ENCODE measurements at regions of chr14 and their contacts with region 1.

Region 1: GRCh38 chr14:51283402-51284085 is 43.5 kb downstream of the TMX1 start:
- DNase-seq: peak; percentile 78
- H3K4me3 ChIP-seq: no peak overlapping the region
- H3K27ac ChIP-seq: no peak overlapping the region
- H3K4me1 ChIP-seq: peaks cover 9% of the 10 kb centered on the region
- H3K27me3 ChIP-seq: no peaks in the 10 kb centered on the region
- CTCF ChIP-seq: peak; percentile 67 to 84

Region 2: DNA sequence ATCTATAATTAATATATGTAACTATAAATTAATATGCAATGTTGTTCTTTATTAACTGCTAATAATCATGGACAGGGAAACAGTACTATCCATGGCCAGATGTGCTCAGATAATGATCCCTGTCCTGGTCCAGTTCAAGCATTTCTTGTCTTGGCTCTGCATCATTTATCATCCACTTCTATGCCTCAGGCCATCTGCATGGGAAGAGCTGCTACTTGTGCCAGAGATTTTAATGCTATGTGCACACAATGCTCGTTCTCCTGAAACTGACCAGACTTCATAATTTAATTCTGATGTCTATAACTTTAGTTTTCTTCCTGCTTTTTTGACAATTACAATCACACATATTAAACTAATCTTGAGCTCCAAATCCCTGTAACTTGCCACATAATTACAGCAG is 54.7 kb before region 1 on chr14:
- CTCF ChIA-PET with region 1: no interaction called
- dilution Hi-C with region 1: no loop called
- in situ Hi-C with region 1: no loop called
- intact Hi-C with region 1: no loop called
- DNase-seq: no peak
- H3K4me3 ChIP-seq: no peak overlapping the region
- H3K27ac ChIP-seq: no peak overlapping the region
- H3K4me1 ChIP-seq: no peaks in the 10 kb centered on the region
- H3K27me3 ChIP-seq: no peaks in the 10 kb centered on the region
- CTCF ChIP-seq: no peak

Region 3: DNA sequence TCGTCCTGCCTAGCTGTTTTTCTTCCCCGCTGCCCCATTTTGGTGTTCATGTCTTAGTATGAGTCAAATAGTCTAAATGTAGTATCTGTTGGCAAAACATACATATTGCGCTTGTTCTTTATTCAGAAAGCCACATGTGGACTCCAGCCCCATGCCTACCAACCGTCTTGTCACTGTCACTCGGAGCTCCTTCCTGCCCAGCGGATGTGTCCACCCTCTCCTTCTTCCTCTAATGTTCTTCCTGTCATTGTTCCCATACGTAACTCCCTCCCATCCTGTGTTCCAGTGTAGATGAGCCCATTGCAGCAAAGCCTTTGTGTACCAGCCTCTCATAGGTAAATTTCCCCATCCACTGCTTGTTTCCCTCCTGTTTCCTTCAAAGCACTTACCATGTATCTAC is 77.0 kb after region 1 on chr14:
- CTCF ChIA-PET with region 1: no interaction called
- dilution Hi-C with region 1: loop called (anchors 5 kb)
- in situ Hi-C with region 1: no loop called
- intact Hi-C with region 1: loop called (anchors 5 kb)
- DNase-seq: no peak
- H3K4me3 ChIP-seq: no peak overlapping the region
- H3K27ac ChIP-seq: no peak overlapping the region
- H3K4me1 ChIP-seq: peaks cover 26% of the 10 kb centered on the region
- H3K27me3 ChIP-seq: no peaks in the 10 kb centered on the region
- CTCF ChIP-seq: no peak

Region 4: GRCh38 chr14:51369814-51370213 is 86.3 kb after region 1 on chr14:
- CTCF ChIA-PET with region 1: no interaction called
- dilution Hi-C with region 1: no loop called
- in situ Hi-C with region 1: no loop called
- intact Hi-C with region 1: loop called (anchors 5 kb)
- DNase-seq: no peak
- H3K4me3 ChIP-seq: no peak overlapping the region
- H3K27ac ChIP-seq: no peak overlapping the region
- H3K4me1 ChIP-seq: peaks cover 41% of the 10 kb centered on the region
- H3K27me3 ChIP-seq: no peaks in the 10 kb centered on the region
- CTCF ChIP-seq: peak; percentile 24 to 47

Region 5: DNA sequence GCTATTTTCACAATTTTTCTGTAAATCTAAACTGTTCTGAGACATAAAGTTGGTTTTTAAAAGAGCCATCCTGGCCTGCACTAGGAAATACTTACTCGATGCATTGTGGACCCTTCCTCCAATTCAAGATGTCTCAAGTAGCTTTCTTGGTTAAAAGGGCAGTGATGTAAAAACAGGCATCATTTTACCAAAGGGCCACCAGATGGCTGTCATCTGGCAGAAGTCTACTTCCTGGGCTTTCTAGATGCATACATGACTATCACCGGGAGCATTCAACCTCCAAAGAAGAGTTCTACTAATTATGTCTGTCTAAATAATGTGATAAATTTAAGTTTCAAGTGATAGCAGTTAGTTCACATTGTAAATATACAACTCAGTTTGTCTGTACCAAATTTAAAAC is 271.4 kb after region 1 on chr14:
- CTCF ChIA-PET with region 1: no interaction called
- dilution Hi-C with region 1: no loop called
- in situ Hi-C with region 1: loop called in 1 of 2 experiments (anchors 25 kb)
- intact Hi-C with region 1: loop called (anchors 2 kb)
- DNase-seq: no peak
- H3K4me3 ChIP-seq: no peak overlapping the region
- H3K27ac ChIP-seq: peak overlapping the region; percentile 11
- H3K4me1 ChIP-seq: peaks cover 39% of the 10 kb centered on the region
- H3K27me3 ChIP-seq: no peaks in the 10 kb centered on the region
- CTCF ChIP-seq: no peak

Region 6: DNA sequence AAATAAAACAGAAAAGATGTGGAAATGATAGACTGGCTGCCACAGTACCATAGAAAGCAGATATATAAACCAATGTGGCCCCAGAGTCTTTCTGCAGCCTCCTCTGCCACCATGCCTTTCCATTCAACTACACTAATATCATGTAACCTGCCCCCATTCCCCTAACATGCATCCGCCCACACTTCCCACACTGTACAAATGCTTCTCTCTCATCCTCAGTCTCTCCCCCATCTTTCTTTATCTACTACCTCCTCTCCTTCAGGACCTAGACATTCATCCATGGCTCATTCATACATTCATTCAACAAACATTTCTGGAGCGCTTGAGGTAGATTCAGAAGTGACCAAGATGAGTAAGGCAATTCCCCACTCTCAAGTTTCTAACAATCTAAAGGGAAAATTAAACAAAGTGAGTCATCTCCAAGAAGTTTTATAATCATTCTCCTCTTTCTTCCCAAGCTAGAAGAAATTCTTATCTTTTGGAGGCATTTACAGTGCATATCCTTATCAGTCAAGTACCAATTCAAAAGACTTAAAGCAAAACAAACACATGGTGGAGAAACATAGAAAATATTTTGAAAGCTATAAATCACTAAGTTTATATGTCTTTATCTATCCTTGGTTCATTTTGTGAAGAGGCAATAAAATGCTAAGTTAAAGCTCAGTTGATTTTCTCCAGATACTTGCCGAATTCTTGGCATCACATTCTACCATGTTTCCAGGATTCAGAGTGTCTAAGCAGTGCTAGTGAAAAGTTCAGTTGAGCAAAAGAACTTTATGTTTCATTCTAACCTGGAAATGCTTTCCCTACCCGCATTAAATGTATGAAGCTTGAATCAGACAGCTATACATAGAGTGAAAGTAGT is 297.7 kb after region 1 on chr14:
- CTCF ChIA-PET with region 1: no interaction called
- dilution Hi-C with region 1: no loop called
- in situ Hi-C with region 1: no loop called
- intact Hi-C with region 1: loop called (anchors 5 kb)
- DNase-seq: peak; percentile 61
- H3K4me3 ChIP-seq: no peak overlapping the region
- H3K27ac ChIP-seq: no peak overlapping the region
- H3K4me1 ChIP-seq: peaks cover 24% of the 10 kb centered on the region
- H3K27me3 ChIP-seq: no peaks in the 10 kb centered on the region
- CTCF ChIP-seq: no peak

Region 7: GRCh38 chr14:51860164-51860824 is 576.8 kb after region 1 on chr14 and contains the start of gene GNG2:
- CTCF ChIA-PET with region 1: no interaction called
- dilution Hi-C with region 1: no loop called
- in situ Hi-C with region 1: no loop called
- intact Hi-C with region 1: no loop called
- DNase-seq: peak; percentile 84
- H3K4me3 ChIP-seq: peak within 1 kb of the TSS; percentile 19 to 40 (median 28)
- H3K27ac ChIP-seq: peak within 1 kb of the TSS; percentile 26
- H3K4me1 ChIP-seq: peaks cover 13% of the 10 kb centered on the region
- H3K27me3 ChIP-seq: no peaks in the 10 kb centered on the region
- CTCF ChIP-seq: no peak
- total RNA-seq, gene GNG2: 2.7 to 6.8 TPM

Region 8: GRCh38 chr14:51979088-51979709 is 695.7 kb after region 1 on chr14:
- CTCF ChIA-PET with region 1: no interaction called
- dilution Hi-C with region 1: no loop called
- in situ Hi-C with region 1: loop called (anchors 25 kb)
- intact Hi-C with region 1: loop called (anchors 1 kb)
- DNase-seq: peak; percentile 54
- H3K4me3 ChIP-seq: no peak overlapping the region
- H3K27ac ChIP-seq: no peak overlapping the region
- H3K4me1 ChIP-seq: no peaks in the 10 kb centered on the region
- H3K27me3 ChIP-seq: no peaks in the 10 kb centered on the region
- CTCF ChIP-seq: peak; percentile 88 to 92

Region 9: DNA sequence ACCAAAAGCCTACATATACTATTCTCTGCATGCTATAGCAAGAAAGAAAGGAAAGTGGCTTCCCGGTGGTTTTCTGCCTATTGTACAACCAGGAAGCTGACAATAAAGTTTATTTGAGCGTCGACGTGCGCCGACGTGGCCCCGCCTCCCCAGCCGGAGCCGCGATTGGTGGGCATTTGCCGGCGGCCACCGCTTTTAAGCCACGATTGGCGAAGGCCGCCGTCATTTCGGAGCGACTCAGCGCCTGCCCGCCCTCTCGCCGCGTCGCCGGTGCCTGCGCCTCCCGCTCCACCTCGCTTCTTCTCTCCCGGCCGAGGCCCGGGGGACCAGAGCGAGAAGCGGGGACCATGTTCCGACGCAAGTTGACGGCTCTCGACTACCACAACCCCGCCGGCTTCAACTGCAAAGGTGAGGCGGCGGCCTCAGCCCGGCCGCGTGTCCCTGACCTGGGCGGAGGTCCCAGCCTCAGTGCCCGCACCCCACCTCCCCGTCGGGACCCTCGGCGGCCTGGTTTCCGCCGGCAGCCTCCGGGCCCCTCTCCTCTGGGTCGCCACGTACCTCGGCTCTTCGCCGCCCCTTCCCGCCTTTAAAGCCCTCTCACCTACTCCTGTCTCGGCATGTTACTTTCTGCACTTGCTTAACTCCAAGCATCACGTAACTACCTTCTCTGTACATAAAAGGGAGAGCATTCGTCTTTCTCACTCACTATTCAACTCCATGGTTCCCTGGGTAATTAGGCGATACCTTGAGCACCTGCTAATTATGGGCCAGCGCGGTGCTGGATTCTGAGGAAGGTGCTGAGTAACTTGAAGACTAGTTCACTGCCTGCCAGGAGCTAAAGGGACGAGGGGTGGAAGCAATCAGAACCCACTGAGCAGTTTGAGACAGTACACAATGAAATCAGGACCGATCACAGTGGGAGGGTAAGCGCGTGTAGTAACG is 706.0 kb after region 1 on chr14 and contains the start of gene RTRAF:
- CTCF ChIA-PET with region 1: no interaction called
- dilution Hi-C with region 1: no loop called
- in situ Hi-C with region 1: loop called (anchors 25 kb)
- intact Hi-C with region 1: no loop called
- DNase-seq: peak; percentile 91
- H3K4me3 ChIP-seq: peak within 1 kb of the TSS; percentile 58 to 98 (median 69)
- H3K27ac ChIP-seq: peak within 1 kb of the TSS; percentile 69
- H3K4me1 ChIP-seq: peaks cover 6% of the 10 kb centered on the region
- H3K27me3 ChIP-seq: no peaks in the 10 kb centered on the region
- CTCF ChIP-seq: no peak
- total RNA-seq, gene RTRAF: 52.7 to 176 TPM